ENCODE measurements at regions of chr15 and their contacts with region 1.

Region 1: GRCh38 chr15:92881802-92882696 is 18.1 kb upstream of the CHD2 start:
- DNase-seq: peak; percentile 91
- ATAC-seq: peak; percentile 90
- H3K4me3 Mint-ChIP-seq: peak overlapping the region; percentile 88
- H3K27ac Mint-ChIP-seq: peak overlapping the region; percentile 99
- H3K4me1 Mint-ChIP-seq: peaks cover 46% of the 10 kb centered on the region
- H3K27me3 Mint-ChIP-seq: no peaks in the 10 kb centered on the region
- CTCF ChIP-seq: no peak

Region 2: GRCh38 chr15:92820236-92821021 is 61.6 kb before region 1 on chr15:
- CTCF ChIA-PET with region 1: interaction called, 6 read pairs
- POLR2A ChIA-PET with region 1: interaction called, 75 read pairs
- intact Hi-C with region 1: loop called (anchors 1 kb)
- DNase-seq: peak; percentile 82
- ATAC-seq: peak; percentile 79
- H3K4me3 Mint-ChIP-seq: peak overlapping the region; percentile 90
- H3K27ac Mint-ChIP-seq: peak overlapping the region; percentile 90
- H3K4me1 Mint-ChIP-seq: peaks cover 62% of the 10 kb centered on the region
- H3K27me3 Mint-ChIP-seq: no peaks in the 10 kb centered on the region
- CTCF ChIP-seq: no peak

Region 3: GRCh38 chr15:92839696-92840095 is 42.4 kb before region 1 on chr15:
- CTCF ChIA-PET with region 1: no interaction called
- POLR2A ChIA-PET with region 1: interaction called, 416 read pairs
- intact Hi-C with region 1: no loop called
- DNase-seq: no peak
- ATAC-seq: peak; percentile 70
- H3K4me3 Mint-ChIP-seq: peak overlapping the region; percentile 45
- H3K27ac Mint-ChIP-seq: peak overlapping the region; percentile 85
- H3K4me1 Mint-ChIP-seq: peaks cover 37% of the 10 kb centered on the region
- H3K27me3 Mint-ChIP-seq: no peaks in the 10 kb centered on the region
- CTCF ChIP-seq: no peak

Region 4: GRCh38 chr15:92853222-92853621 is 28.8 kb before region 1 on chr15:
- CTCF ChIA-PET with region 1: no interaction called
- POLR2A ChIA-PET with region 1: interaction called, 152 read pairs
- intact Hi-C with region 1: loop called (anchors 1 kb)
- DNase-seq: no peak
- ATAC-seq: no peak
- H3K4me3 Mint-ChIP-seq: peak overlapping the region; percentile 12
- H3K27ac Mint-ChIP-seq: peak overlapping the region; percentile 5
- H3K4me1 Mint-ChIP-seq: peaks cover 42% of the 10 kb centered on the region
- H3K27me3 Mint-ChIP-seq: no peaks in the 10 kb centered on the region
- CTCF ChIP-seq: no peak

Region 5: DNA sequence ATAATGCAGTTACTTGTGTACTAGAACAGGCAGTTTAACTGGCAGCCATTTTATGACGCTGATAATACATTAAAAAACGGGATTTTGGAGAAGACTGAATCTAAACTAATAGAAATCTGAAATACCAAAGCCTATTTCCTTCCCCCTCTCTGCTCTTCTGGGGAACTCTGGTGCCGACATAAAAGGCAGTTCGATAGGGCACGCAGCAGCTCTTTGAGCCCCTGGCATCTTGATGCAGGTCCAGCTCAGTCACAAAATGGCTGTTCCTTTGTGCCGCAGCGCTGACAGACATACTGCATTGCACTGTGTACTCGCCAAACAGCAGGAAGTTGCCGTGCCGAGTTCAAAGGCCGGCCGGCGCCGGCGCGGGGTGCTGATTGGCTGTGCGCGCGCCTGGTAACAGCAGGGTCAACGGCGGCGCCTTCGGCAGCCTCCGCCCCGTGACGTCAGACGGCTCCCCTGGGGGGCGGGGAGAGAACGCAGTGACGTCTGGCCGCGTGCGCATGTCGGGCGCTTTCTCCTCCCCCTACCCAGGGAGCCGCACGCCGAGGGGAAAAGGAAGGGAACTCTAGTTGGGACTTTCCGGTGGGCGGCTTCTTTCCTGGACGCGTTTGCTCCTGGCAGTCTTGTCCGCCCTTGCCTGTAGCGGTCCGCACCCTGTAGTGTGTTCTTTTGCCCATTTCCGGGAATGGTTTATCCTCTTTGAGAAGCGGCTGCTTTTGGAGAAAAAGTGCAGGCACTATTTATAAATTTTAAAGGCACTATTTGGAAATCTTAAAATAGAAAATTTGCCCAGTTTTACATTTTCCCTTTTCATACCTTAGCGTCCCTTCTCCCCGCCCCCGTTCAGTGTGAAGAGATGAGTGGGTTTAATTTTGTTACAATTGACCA is 22.1 kb after region 1 on chr15:
- CTCF ChIA-PET with region 1: interaction called, 9 read pairs
- POLR2A ChIA-PET with region 1: interaction called, 449 read pairs
- intact Hi-C with region 1: loop called (anchors 1 kb)
- DNase-seq: peak; percentile 99
- ATAC-seq: peak; percentile 81
- H3K4me3 Mint-ChIP-seq: peak overlapping the region; percentile 97
- H3K27ac Mint-ChIP-seq: peak overlapping the region; percentile 100
- H3K4me1 Mint-ChIP-seq: peaks cover 73% of the 10 kb centered on the region
- H3K27me3 Mint-ChIP-seq: no peaks in the 10 kb centered on the region
- CTCF ChIP-seq: no peak

Region 6: GRCh38 chr15:93321881-93322289 is 439.8 kb after region 1 on chr15:
- CTCF ChIA-PET with region 1: no interaction called
- POLR2A ChIA-PET with region 1: no interaction called
- intact Hi-C with region 1: no loop called
- DNase-seq: no peak
- ATAC-seq: no peak
- H3K4me3 Mint-ChIP-seq: no peak overlapping the region
- H3K27ac Mint-ChIP-seq: no peak overlapping the region
- H3K4me1 Mint-ChIP-seq: no peaks in the 10 kb centered on the region
- H3K27me3 Mint-ChIP-seq: no peaks in the 10 kb centered on the region
- CTCF ChIP-seq: no peak

Measured in activated B cell treated with CpG ODN at 0.5 μM for 24 hours (primary cell).